T-cell (primary cell): ENCODE measurements at regions of chr2 and their contacts with region 1.

Region 1: DNA sequence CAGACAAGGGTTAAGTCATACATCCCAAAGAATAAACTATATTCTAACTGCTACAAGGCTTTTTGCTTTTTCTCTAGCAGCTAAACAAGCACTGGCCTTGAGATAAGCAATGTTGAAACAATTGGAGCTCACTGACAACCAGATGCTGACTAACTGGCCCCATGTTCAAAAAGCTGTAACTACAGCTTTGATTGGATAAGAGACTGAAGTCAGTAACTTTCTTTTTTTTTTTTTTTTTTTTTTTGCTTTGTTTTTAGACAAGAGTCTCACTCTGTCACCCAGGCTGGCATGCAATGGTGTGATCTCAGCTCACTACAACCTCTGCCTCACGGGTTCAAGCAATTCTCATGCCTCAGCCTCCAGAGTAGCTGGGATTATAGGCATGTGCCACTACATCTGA is 45.4 kb upstream of the TMEM163 start:
- DNase-seq: no peak
- ATAC-seq: no peak
- H3K4me3 ChIP-seq: no peak overlapping the region
- H3K4me3 Mint-ChIP-seq: no peak overlapping the region
- H3K27ac ChIP-seq: no peak overlapping the region
- H3K27ac Mint-ChIP-seq: no peak overlapping the region
- H3K4me1 ChIP-seq: no peaks in the 10 kb centered on the region
- H3K4me1 Mint-ChIP-seq: no peaks in the 10 kb centered on the region
- H3K27me3 ChIP-seq: peaks cover 0 to 7% of the 10 kb centered on the region in 2 experiments
- H3K27me3 Mint-ChIP-seq: peaks cover 3 to 28% of the 10 kb centered on the region in 2 donors

Region 2: DNA sequence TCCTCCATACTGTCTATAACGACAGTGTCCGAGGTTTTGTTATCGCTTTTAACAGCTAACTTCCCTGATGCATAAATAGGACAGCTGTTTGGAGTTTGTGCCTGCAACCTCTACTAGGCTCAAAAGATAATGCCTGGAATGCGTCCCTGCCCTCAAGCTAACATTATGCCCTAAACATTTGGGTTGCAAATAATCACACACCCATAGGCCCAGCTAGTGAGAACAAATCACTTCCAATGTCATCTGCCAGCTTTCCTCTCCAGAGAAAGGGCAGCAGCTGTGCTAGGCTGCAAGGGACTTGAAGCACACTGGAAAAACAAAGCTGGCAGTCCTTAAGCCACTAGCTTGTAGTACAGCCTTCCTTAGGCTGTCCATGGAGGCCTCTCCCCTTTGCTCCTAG is 1892.3 kb before region 1 on chr2:
- CTCF ChIA-PET with region 1: no interaction called
- POLR2A ChIA-PET with region 1: no interaction called
- DNase-seq: no peak
- ATAC-seq: no peak
- H3K4me3 ChIP-seq: no peak overlapping the region
- H3K4me3 Mint-ChIP-seq: no peak overlapping the region
- H3K27ac ChIP-seq: no peak overlapping the region
- H3K27ac Mint-ChIP-seq: no peak overlapping the region
- H3K4me1 ChIP-seq: no peaks in the 10 kb centered on the region
- H3K4me1 Mint-ChIP-seq: no peaks in the 10 kb centered on the region
- H3K27me3 ChIP-seq: no peaks in the 10 kb centered on the region
- H3K27me3 Mint-ChIP-seq: no peaks in the 10 kb centered on the region

Region 3: GRCh38 chr2:134098321-134098720 is 665.8 kb before region 1 on chr2:
- CTCF ChIA-PET with region 1: no interaction called
- POLR2A ChIA-PET with region 1: no interaction called
- DNase-seq: no peak
- ATAC-seq: no peak
- H3K4me3 ChIP-seq: no peak overlapping the region
- H3K4me3 Mint-ChIP-seq: no peak overlapping the region
- H3K27ac ChIP-seq: no peak overlapping the region
- H3K27ac Mint-ChIP-seq: no peak overlapping the region
- H3K4me1 ChIP-seq: no peaks in the 10 kb centered on the region
- H3K4me1 Mint-ChIP-seq: no peaks in the 10 kb centered on the region
- H3K27me3 ChIP-seq: no peaks in the 10 kb centered on the region
- H3K27me3 Mint-ChIP-seq: peaks cover 19 to 27% of the 10 kb centered on the region in 2 donors

Region 4: GRCh38 chr2:134780972-134781371 is 16.8 kb after region 1 on chr2:
- CTCF ChIA-PET with region 1: interaction called in 1 of 2 experiments, 19 read pairs
- POLR2A ChIA-PET with region 1: no interaction called
- DNase-seq: no peak
- ATAC-seq: peak in 1 of 4 experiments; percentile 49
- H3K4me3 ChIP-seq: no peak overlapping the region
- H3K4me3 Mint-ChIP-seq: no peak overlapping the region
- H3K27ac ChIP-seq: no peak overlapping the region
- H3K27ac Mint-ChIP-seq: no peak overlapping the region
- H3K4me1 ChIP-seq: peaks cover 0 to 5% of the 10 kb centered on the region in 2 experiments
- H3K4me1 Mint-ChIP-seq: peaks cover 6 to 12% (median 7%) of the 10 kb centered on the region in 3 donors
- H3K27me3 ChIP-seq: no peaks in the 10 kb centered on the region
- H3K27me3 Mint-ChIP-seq: peaks cover 3 to 4% of the 10 kb centered on the region in 2 donors

Region 5: DNA sequence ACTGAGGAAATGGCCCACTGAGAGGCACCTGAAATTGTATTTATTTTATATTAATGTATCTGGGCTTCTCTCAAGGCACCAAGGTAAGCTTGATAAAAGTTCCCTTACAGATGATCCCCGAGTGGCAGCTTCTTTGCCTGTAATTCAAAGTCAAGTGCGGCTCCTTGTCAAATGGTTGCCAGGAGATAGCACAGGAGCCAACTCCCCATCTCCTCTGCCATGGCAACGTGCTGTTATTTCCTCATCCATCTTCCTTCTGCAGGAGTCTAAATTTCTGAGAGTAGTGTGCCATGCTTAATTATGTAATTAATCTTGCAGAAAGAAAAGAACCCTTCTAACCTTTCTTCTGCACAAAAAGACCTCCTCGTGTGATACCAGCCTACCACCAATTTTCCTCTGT is 28.0 kb after region 1 on chr2:
- CTCF ChIA-PET with region 1: no interaction called
- POLR2A ChIA-PET with region 1: no interaction called
- DNase-seq: no peak
- ATAC-seq: no peak
- H3K4me3 ChIP-seq: no peak overlapping the region
- H3K4me3 Mint-ChIP-seq: no peak overlapping the region
- H3K27ac ChIP-seq: no peak overlapping the region
- H3K27ac Mint-ChIP-seq: no peak overlapping the region
- H3K4me1 ChIP-seq: no peaks in the 10 kb centered on the region
- H3K4me1 Mint-ChIP-seq: no peaks in the 10 kb centered on the region
- H3K27me3 ChIP-seq: peaks cover 0 to 2% of the 10 kb centered on the region in 2 experiments
- H3K27me3 Mint-ChIP-seq: peaks cover 6 to 10% of the 10 kb centered on the region in 2 donors

Region 6: DNA sequence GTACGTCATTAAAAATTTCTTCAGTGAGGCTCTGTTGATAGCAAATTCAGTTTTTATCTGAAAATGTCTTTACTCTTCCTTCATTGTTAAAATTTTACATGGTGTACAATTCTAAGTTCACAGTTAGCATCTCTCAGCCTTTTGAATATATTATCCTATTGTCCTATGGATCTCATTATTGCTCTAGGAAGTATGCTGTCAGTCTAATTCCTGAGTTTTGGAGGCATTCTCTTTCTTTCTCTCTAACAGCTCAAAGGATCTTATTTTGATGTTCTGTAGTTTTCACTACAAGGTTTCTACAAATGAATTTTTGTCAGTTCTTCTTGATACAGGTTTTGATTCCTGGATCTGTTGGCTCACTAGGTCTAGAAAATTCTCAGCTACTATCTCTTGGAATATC is 71.3 kb after region 1 on chr2:
- CTCF ChIA-PET with region 1: no interaction called
- POLR2A ChIA-PET with region 1: no interaction called
- DNase-seq: no peak
- ATAC-seq: no peak
- H3K4me3 ChIP-seq: no peak overlapping the region
- H3K4me3 Mint-ChIP-seq: no peak overlapping the region
- H3K27ac ChIP-seq: no peak overlapping the region
- H3K27ac Mint-ChIP-seq: no peak overlapping the region
- H3K4me1 ChIP-seq: no peaks in the 10 kb centered on the region
- H3K4me1 Mint-ChIP-seq: no peaks in the 10 kb centered on the region
- H3K27me3 ChIP-seq: no peaks in the 10 kb centered on the region
- H3K27me3 Mint-ChIP-seq: peaks cover 0 to 17% of the 10 kb centered on the region in 2 donors